ENCODE measurements at regions of chr4 and their contacts with region 1.

Region 1: GRCh38 chr4:93791570-93792195 is 36.9 kb upstream of the ATOH1 start:
- DNase-seq: peak; percentile 69
- H3K4me3 ChIP-seq: no peak overlapping the region
- H3K27ac ChIP-seq: no peak overlapping the region
- H3K4me1 ChIP-seq: no peaks in the 10 kb centered on the region
- H3K27me3 ChIP-seq: no peaks in the 10 kb centered on the region
- CTCF ChIP-seq: peak; percentile 69

Region 2: DNA sequence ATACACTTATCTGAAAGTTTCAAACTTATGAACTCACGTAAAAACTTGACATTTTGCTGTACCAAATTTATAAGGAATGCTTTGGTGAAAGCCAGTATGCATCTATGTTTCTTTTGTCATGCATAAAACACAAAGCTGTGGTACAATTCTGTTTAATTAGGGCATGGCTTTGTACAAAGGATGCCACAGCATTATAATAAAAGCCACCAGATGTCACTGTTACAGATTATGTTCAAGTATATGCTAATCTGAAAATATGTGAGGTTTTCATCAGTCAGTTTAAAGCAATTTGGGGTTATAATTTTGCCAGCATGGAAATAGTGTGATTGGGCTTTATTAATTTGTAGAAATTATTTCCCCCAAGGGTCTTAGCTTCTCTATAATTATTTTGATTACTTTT is 105.9 kb after region 1 on chr4:
- intact Hi-C with region 1: loop called (anchors 10 kb)
- DNase-seq: no peak
- H3K4me3 ChIP-seq: no peak overlapping the region
- H3K27ac ChIP-seq: no peak overlapping the region
- H3K4me1 ChIP-seq: no peaks in the 10 kb centered on the region
- H3K27me3 ChIP-seq: no peaks in the 10 kb centered on the region
- CTCF ChIP-seq: peak; percentile 27

Region 3: DNA sequence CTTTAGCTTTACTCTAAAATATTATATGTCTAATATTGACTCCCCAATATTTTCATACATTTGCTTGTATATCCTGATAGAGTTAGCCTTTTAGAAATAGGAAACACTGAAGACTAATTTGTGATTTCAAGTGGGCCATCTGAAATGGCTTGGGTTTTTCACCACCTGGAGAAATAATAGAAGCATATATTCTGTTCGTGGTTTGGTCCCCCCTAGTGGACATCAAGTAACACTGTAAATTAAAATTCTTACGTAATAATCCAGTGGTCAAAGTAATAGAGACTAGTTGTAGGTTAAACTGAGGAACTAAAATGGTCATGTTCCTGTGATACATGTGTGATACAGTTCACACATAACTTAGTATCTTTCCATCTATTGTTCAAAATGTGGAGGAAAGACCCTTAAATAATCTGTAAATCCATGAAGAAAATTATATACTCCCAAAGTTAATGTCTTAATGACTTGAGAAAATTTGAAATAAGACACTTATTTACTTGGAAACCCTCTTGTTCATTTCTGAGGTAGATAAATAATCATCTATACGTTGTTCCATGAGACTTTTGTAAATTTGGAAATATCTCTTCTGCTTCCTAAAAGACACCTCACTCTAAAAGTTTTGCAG is 336.1 kb after region 1 on chr4:
- intact Hi-C with region 1: loop called (anchors 2 kb)
- DNase-seq: no peak
- H3K4me3 ChIP-seq: no peak overlapping the region
- H3K27ac ChIP-seq: no peak overlapping the region
- H3K4me1 ChIP-seq: no peaks in the 10 kb centered on the region
- H3K27me3 ChIP-seq: no peaks in the 10 kb centered on the region
- CTCF ChIP-seq: peak; percentile 52

Region 4: GRCh38 chr4:94284889-94285288 is 493.2 kb after region 1 on chr4:
- intact Hi-C with region 1: no loop called
- DNase-seq: no peak
- H3K4me3 ChIP-seq: no peak overlapping the region
- H3K27ac ChIP-seq: no peak overlapping the region
- H3K4me1 ChIP-seq: no peaks in the 10 kb centered on the region
- H3K27me3 ChIP-seq: no peaks in the 10 kb centered on the region
- CTCF ChIP-seq: no peak

Region 5: DNA sequence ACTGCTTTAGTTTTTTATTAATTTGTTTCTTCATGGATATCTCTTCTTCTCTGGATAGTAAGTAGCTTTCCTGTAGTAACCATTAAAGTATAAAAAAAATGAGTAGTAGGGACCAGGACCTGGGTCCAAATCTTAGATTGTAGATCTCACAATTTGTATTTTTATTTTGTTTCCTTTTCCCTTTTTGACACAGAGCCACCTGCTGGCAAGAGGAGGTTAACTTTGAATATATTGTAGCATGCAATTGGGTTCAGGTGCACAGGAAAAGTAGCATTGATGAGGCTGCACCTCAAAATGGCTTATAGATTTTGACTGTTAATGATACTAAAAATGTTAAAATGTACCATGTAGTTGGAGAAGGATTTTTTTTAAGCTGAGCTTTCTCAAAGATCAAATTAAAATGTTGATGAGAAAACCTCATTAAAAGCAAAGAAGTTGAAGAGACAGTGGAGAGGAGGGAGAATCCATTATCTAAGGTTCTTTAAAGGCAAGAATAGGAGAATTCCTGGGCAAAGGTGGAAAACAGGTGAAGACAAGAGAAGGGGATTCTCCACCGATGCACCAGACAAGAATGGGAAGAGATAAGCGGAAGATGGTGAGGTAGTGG is 599.2 kb after region 1 on chr4:
- intact Hi-C with region 1: loop called (anchors 10 kb)
- DNase-seq: peak; percentile 27
- H3K4me3 ChIP-seq: no peak overlapping the region
- H3K27ac ChIP-seq: no peak overlapping the region
- H3K4me1 ChIP-seq: no peaks in the 10 kb centered on the region
- H3K27me3 ChIP-seq: no peaks in the 10 kb centered on the region
- CTCF ChIP-seq: peak; percentile 33

Measured in colonic mucosa (tissue), 4 donors.